Heart right ventricle (tissue), 16 donors: ENCODE measurements at regions of chr19 and their contacts with region 1.

Region 1: DNA sequence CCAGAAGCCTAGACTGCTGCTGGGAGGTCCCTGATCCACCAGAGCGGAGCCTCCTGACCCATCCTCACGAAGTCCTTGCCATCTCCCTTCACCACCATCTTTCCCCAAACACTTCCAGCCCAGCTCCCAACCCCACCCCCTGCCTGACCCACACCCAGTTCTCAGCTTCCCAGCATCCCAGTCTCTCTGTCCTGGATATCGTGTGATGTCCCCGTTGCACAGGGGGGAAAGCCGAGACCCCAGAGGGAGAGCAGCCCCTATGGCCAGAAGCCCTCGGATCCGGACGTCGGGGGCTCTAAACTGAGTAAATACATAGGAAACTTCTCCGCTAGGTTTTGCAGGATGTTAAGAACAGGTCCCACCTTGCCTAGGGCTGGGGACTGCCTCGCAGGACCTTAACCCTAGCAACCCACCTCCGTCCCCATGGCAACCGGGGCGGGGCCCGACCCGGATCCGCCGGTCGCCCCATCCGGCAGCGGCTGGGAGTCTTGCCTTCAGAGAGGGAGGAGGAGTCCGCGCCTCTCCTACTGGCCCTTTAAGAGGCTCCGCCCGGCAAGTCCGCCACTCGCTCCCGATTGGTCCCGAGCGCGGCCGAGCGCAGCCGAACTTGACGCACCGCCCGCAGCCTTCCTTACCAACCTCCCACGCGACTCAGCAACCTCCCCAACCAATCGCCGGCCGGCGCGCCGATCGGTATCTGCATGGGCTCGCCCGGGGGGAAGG is 451 bp upstream of the HMG20B start:
- DNase-seq: peak; percentile 100
- ATAC-seq: peak; percentile 96 to 99 (median 98)
- H3K4me3 ChIP-seq: peak overlapping the region; percentile 59 to 100 (median 96)
- H3K27ac ChIP-seq: peak overlapping the region in 6 of 10 donors; percentile 37 to 84 (median 60)
- H3K4me1 ChIP-seq: peaks cover 10 to 40% (median 26%) of the 10 kb centered on the region in 9 donors
- H3K27me3 ChIP-seq: no peaks in the 10 kb centered on the region
- CTCF ChIP-seq: no peak

Region 2: GRCh38 chr19:2610637-2611482 is 961.4 kb before region 1 on chr19:
- intact Hi-C with region 1: no loop called
- DNase-seq: peak; percentile 92 to 96
- ATAC-seq: peak; percentile 87 to 96 (median 93)
- H3K4me3 ChIP-seq: peak overlapping the region in 9 of 10 donors; percentile 19 to 57 (median 52)
- H3K27ac ChIP-seq: peak overlapping the region; percentile 72 to 91 (median 86)
- H3K4me1 ChIP-seq: peaks cover 0 to 42% (median 21%) of the 10 kb centered on the region in 9 donors
- H3K27me3 ChIP-seq: peaks cover 0 to 5% (median 0%) of the 10 kb centered on the region in 7 donors
- CTCF ChIP-seq: peak; percentile 92 to 99 (median 98)

Region 3: GRCh38 chr19:3505598-3506383 is 66.5 kb before region 1 on chr19 and contains the start of gene FZR1:
- intact Hi-C with region 1: loop called in 1 of 10 experiments (anchors 2 kb)
- DNase-seq: peak; percentile 98 to 100
- ATAC-seq: peak; percentile 96 to 98 (median 98)
- H3K4me3 ChIP-seq: peak within 1 kb of the TSS; percentile 77 to 100 (median 96)
- H3K27ac ChIP-seq: peak within 1 kb of the TSS; percentile 36 to 96 (median 88)
- H3K4me1 ChIP-seq: peaks cover 4 to 42% (median 25%) of the 10 kb centered on the region in 9 donors
- H3K27me3 ChIP-seq: no peaks in the 10 kb centered on the region
- CTCF ChIP-seq: peak in 4 of 9 donors; percentile 7 to 32 (median 17)
- total RNA-seq, gene FZR1: 21.0 to 30.8 (median 27.1) TPM

Region 4: GRCh38 chr19:3557461-3558248 is 14.6 kb before region 1 on chr19 and contains the start of gene MFSD12:
- intact Hi-C with region 1: loop called in 3 of 10 experiments (anchors 1 kb)
- DNase-seq: peak; percentile 94 to 95
- ATAC-seq: peak; percentile 97 to 99 (median 98)
- H3K4me3 ChIP-seq: peak within 1 kb of the TSS; percentile 62 to 96 (median 89)
- H3K27ac ChIP-seq: peak within 1 kb of the TSS in 9 of 10 donors; percentile 54 to 90 (median 81)
- H3K4me1 ChIP-seq: peaks cover 10 to 52% (median 49%) of the 10 kb centered on the region in 9 donors
- H3K27me3 ChIP-seq: no peaks in the 10 kb centered on the region
- CTCF ChIP-seq: no peak
- total RNA-seq, gene MFSD12: 11.6 to 41.3 (median 21.0) TPM

Region 5: DNA sequence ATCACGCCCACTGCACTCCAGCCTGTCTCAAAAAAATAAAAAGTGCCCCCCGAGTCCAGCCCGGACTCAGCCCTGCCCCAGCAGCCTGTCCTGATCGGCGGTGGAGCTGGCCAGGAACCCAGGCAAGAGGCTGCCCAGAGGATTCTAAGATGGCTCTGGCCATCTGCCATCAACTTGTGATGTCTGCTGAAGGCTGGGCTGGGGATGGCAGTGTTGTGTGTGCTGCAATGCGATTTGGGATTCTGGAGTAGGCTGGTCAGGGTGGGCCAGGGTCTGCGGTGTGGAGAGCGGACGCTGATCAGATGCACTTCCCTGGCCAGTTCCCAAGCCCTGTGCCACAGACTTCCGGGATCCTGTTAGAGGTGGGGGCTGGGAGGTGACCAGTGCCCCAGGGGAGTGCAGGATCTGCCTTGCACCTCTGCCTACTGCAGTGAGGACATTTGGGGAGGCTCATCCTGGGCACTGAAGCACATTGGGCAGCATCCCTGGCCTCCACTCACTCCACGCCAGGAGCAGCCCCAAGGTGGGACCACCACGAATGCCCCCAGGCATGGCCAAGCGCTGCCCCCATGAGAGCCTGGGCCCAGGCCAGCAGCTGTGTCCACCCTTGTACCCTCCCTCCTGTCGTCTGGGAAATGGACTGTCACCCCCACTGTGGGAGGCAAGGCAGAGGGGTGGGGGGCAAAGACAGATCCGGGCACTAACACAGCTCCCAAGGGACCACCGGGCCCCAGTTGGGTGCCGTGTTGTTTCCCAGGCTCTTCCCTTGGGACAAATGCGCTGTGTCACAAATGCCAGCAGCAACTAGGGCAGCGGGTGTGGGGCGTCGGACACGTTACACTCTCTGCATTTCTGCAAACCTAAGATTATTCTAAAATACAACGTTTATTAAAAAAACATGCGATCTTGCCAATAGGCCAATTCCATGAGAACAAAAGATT is 37.8 kb after region 1 on chr19:
- intact Hi-C with region 1: loop called in 2 of 10 experiments (anchors 5 kb)
- DNase-seq: peak in 1 of 2 donors; percentile 12
- ATAC-seq: no peak
- H3K4me3 ChIP-seq: no peak overlapping the region
- H3K27ac ChIP-seq: peak overlapping the region in 9 of 10 donors; percentile 56 to 95 (median 92)
- H3K4me1 ChIP-seq: peaks cover 10 to 55% (median 45%) of the 10 kb centered on the region in 9 donors
- H3K27me3 ChIP-seq: peaks cover 0 to 22% (median 2%) of the 10 kb centered on the region in 7 donors
- CTCF ChIP-seq: no peak

Region 6: DNA sequence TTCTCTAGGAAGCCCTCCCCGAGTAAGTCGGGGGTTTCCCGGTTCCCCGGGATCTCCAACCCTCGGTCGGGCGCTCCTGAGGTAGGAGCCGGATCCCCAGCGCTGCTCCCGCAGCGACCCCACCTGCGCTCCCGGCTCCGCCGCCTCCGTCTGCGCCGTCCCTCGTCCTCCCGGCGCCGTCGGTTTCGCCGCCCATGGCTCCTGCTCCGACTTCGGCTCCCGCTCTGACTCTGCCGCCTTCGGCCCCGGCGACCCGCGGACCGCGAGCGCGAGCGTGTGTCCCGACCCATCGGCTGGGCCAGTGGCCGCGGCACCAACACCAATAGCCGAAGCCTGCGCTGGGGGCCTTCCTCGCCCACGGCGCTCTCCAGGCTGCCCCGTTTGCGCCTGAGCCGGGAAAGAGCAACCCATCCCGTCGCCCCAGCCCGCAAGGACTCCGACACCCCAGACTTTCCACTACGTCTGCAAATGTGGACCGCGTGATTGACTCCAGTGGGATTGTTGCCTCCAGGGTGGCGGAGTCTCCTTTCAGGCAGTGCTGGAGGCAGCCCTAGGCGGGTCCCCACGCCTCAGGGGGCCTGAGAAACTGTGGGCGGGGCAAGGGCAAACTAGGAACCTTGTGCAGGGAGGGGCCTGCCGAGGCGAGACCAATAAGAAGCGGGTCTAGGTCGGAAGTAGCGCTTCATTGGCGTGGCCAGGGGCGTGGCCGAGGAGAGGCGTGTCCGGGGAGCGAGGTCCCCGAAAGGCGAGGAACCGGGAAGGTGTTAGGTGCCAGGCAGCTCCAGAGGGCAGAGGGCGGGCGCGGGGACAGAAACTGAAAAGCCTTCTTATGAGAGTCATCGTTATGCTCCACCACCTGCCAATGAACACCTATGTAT is 54.4 kb after region 1 on chr19 and contains the start of gene CACTIN:
- intact Hi-C with region 1: loop called in 1 of 10 experiments (anchors 10 kb)
- DNase-seq: peak; percentile 99
- ATAC-seq: peak; percentile 97 to 99 (median 99)
- H3K4me3 ChIP-seq: peak within 1 kb of the TSS; percentile 64 to 100 (median 90)
- H3K27ac ChIP-seq: peak within 1 kb of the TSS; percentile 85 to 98 (median 95)
- H3K4me1 ChIP-seq: peaks cover 11 to 27% (median 19%) of the 10 kb centered on the region in 9 donors
- H3K27me3 ChIP-seq: no peaks in the 10 kb centered on the region
- CTCF ChIP-seq: peak in 3 of 9 donors; percentile 3 to 19 (median 12)
- total RNA-seq, gene CACTIN: 9.7 to 15.8 (median 12.1) TPM